ENCODE measurements at regions of chr6 and their contacts with region 1.

Region 1: DNA sequence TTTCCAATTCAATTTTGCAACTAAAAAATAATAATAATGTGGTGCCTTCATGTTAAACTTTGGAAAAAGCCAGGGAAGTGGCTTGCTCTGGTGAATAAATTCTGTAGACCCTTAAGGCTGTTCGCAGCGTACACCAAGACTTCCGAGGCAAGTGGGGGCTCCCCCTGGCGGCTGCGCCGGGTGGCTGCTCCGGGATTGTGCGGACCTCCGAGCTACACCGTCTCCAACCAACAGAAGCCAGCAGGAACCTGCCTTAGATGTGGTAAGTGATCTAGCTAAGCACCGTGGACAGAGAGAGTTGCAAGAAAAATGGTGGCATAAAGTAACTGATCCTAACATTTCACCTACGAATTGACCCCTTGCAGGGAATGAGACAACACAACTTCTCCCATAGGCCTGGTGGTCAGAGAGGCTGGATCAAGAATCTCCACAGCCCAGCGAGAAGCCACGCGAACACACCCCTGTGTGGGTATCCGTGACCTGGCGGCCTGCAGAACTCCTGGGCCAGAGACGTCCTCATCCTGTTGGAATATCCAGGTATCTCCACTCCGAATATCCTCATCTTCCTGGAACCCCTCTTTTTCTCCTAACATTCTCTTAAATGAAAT is 69.6 kb downstream of the TBXT start:
- DNase-seq: peak; percentile 83
- ATAC-seq: peak; percentile 89

Region 2: DNA sequence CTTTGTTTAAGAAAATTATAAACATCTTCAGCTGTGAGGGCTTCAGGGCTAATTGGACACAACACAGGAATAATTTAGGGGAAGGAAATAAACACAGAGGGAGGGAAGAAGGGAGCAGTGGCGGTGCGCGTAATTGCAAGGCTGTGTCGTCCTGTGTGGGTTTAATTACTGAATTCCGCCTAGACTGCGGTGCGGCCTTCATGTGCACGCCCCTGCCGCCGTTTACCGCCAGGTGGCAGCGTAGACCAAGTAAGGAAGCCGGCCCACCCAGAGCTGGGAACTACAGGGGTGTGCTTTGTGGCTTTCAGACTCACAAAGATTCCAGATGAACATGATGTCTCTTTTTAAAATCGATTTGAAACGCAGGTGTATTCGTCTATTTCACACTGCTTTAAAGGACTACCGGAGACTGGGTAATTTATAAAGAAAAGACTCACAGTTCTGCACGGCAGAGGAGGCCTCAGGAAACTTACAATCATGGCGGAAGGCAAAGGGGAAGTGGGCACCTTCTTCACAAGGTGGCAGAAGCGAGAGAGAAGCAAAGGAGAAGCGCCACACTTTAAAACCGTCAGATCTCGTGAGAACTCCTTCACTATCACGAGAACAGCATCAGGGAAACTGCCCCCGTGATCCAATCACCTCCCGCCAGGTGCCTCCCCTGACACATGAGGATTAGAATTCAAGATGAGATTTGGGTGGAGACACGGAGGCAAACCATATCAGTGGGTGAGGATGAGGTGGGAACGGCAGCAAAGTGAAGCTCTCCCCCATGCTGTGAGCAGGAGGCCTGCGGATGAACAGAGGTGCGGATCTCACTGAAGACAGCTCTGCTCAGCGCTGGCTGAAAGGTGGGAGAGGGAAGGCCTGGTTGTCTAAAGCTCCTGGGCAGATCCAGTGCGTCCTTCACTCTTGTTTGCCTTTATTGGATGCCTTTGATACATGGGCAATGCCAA is 212.9 kb before region 1 on chr6:
- intact Hi-C with region 1: loop called (anchors 2 kb)
- DNase-seq: peak; percentile 91
- ATAC-seq: peak; percentile 78

Region 3: GRCh38 chr6:165987483-165988301 is 110.3 kb before region 1 on chr6:
- intact Hi-C with region 1: loop called (anchors 5 kb)
- DNase-seq: peak; percentile 91
- ATAC-seq: peak; percentile 88

Region 4: GRCh38 chr6:166005944-166006899 is 91.8 kb before region 1 on chr6:
- intact Hi-C with region 1: loop called (anchors 5 kb)
- DNase-seq: peak; percentile 78
- ATAC-seq: peak; percentile 80

Measured in Right ventricle myocardium inferior (tissue), 1 donor.